ENCODE measurements at regions of chr14 and their contacts with region 1.

Region 1: DNA sequence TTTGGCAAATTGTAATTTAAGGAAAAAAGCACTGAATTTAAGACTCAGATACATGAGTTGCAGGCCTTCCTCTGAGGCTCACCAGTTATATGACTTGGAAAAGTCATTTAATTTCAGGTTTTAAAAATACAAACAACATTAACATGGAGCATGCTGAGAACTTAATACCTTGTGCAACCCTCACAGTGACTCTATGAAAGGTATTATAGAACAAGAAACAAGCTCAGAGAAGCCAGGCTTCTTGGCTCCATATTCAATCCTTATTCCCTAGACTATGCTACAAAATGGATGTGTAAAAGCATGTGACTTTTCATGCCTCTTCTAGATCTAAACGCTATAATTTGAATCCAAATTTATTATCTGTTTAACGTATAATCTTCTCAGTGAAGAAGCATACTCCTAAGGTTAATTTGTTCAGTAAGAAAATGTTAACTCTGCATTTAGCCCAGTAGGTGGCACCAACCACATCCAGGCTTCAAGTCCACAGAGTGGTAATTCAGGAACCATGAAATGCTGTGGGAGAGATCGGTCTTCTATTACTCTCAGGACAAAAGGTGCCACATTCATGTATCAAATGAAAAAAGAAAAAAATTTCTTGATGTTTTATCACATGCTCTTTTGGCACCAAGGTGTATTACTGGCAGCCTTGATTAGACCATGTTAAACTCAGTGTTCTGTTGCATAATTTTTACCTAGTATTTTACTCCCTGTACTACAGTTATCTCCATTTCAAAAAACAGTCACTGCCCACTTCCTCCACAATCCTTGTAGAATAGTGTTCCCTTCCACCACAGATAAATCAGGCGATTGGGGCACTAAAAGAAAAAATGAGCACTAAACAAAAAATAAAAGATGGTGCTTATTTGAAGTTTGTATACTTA is 9.3 kb downstream of the CCDC196 start:
- DNase-seq: peak; percentile 49
- ATAC-seq: peak; percentile 85
- H3K4me3 Mint-ChIP-seq: no peak overlapping the region
- H3K27ac Mint-ChIP-seq: no peak overlapping the region
- H3K4me1 Mint-ChIP-seq: peaks cover 20% of the 10 kb centered on the region
- H3K27me3 Mint-ChIP-seq: peaks cover 2% of the 10 kb centered on the region
- CTCF ChIP-seq: peak; percentile 71

Region 2: DNA sequence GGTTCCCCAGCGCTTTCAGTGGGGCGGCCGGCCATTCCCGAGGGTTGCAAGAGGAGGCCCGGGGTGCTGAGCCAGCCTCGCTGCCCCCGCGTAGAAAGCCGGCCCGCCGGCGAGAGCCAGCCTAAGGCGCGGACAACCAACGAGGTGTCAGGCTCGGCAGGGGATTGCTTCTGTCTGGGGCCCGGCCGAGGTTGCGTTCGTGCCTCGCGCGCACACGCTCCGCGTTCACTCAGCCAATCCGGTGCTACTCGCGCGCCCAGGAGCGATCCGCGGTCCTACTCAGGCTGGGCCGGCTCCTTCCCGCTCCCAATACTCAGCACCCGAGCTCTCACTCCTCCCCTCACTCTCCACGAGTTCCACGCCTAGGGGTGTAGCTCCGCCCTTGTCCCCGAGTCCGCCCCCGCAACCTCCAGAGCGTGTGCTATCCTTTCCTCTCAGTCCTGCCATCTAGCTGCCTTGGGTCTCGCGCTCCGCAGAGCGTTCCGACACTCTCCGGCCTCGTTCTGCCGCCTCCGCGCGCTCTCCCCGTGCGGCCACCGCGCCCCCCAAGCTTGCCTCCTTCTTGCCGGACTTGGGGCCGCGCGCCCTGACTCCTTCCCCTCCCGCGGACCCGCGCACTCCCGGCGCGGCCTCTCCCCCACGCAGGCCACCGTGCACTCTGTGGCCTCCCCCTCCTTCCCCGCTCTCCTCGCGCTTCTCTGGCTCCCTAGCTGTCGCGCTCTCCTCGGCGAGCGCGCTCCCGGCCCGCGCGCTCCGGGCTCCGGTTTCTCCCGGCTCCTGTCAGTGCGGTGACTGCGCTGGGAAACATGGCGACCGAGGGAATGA is 12.5 kb after region 1 on chr14 and contains the start of gene GPHN:
- CTCF ChIA-PET with region 1: interaction called, 5 read pairs
- POLR2A ChIA-PET with region 1: interaction called, 20 read pairs
- intact Hi-C with region 1: no loop called
- DNase-seq: peak; percentile 93
- ATAC-seq: peak; percentile 95
- H3K4me3 Mint-ChIP-seq: peak within 1 kb of the TSS; percentile 92
- H3K27ac Mint-ChIP-seq: peak within 1 kb of the TSS; percentile 93
- H3K4me1 Mint-ChIP-seq: peaks cover 30% of the 10 kb centered on the region
- H3K27me3 Mint-ChIP-seq: peaks cover 11% of the 10 kb centered on the region
- CTCF ChIP-seq: no peak
- total RNA-seq, gene GPHN: 26.3 to 26.6 TPM

Region 3: DNA sequence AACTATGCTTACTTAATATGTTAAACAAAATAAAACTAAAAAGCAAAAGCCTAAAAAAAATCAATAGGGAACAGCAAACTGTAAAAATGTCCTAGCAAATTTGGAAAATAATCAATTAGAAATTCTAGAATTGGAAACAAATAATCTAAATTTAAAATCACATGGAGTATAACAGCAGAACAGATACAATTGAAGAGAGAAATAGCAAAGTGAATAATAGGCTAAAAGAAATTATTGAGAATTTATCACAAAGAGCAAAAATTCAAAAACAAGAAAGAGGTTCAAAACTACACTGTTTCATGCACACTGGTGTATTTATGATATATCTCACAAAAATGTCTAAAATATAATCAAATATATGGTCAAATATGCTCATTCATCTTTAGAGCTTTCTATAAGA is 244.4 kb after region 1 on chr14:
- CTCF ChIA-PET with region 1: no interaction called
- POLR2A ChIA-PET with region 1: no interaction called
- intact Hi-C with region 1: loop called (anchors 5 kb)
- DNase-seq: no peak
- ATAC-seq: no peak
- H3K4me3 Mint-ChIP-seq: no peak overlapping the region
- H3K27ac Mint-ChIP-seq: no peak overlapping the region
- H3K4me1 Mint-ChIP-seq: no peaks in the 10 kb centered on the region
- H3K27me3 Mint-ChIP-seq: no peaks in the 10 kb centered on the region
- CTCF ChIP-seq: no peak

Region 4: DNA sequence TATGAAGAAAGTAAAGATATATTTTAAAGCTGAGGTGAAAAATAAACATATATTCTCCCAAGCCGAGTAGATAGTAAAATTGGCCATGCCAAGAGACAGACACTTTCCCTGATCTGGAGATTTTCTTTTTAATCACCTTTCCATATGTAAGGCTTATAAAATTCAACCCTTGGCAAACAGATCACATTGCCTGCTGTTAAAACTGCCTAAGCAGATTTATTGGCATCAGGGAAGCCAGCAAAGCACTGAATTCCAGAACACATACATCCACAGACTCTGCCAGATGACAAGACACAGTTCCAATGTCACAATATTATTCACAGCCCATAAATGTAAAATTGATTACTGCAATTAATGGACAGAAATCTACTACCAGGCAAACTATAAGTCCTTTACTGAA is 615.6 kb after region 1 on chr14:
- CTCF ChIA-PET with region 1: no interaction called
- POLR2A ChIA-PET with region 1: no interaction called
- intact Hi-C with region 1: loop called (anchors 5 kb)
- DNase-seq: no peak
- ATAC-seq: no peak
- H3K4me3 Mint-ChIP-seq: no peak overlapping the region
- H3K27ac Mint-ChIP-seq: no peak overlapping the region
- H3K4me1 Mint-ChIP-seq: no peaks in the 10 kb centered on the region
- H3K27me3 Mint-ChIP-seq: no peaks in the 10 kb centered on the region
- CTCF ChIP-seq: no peak